ENCODE measurements at regions of chr7 and their contacts with region 1.

Region 1: GRCh38 chr7:74272305-74273038 is 16.7 kb upstream of the CLIP2 start:
- DNase-seq: peak; percentile 58
- ATAC-seq: peak; percentile 21
- H3K4me3 Mint-ChIP-seq: no peak overlapping the region
- H3K27ac Mint-ChIP-seq: peak overlapping the region; percentile 57
- H3K4me1 Mint-ChIP-seq: peaks cover 11% of the 10 kb centered on the region
- H3K27me3 Mint-ChIP-seq: peaks cover 6% of the 10 kb centered on the region
- CTCF ChIP-seq: no peak

Region 2: GRCh38 chr7:74083117-74083876 is 189.2 kb before region 1 on chr7 and contains the start of gene LIMK1:
- CTCF ChIA-PET with region 1: no interaction called
- POLR2A ChIA-PET with region 1: interaction called, 3 read pairs
- intact Hi-C with region 1: loop called (anchors 5 kb)
- DNase-seq: peak; percentile 80
- ATAC-seq: peak; percentile 95
- H3K4me3 Mint-ChIP-seq: peak within 1 kb of the TSS; percentile 83
- H3K27ac Mint-ChIP-seq: peak within 1 kb of the TSS; percentile 86
- H3K4me1 Mint-ChIP-seq: peaks cover 8% of the 10 kb centered on the region
- H3K27me3 Mint-ChIP-seq: no peaks in the 10 kb centered on the region
- CTCF ChIP-seq: no peak
- total RNA-seq, gene LIMK1: 17.8 to 20.8 TPM

Region 3: GRCh38 chr7:74289018-74289658 is 16.7 kb after region 1 on chr7 and contains the start of gene CLIP2:
- CTCF ChIA-PET with region 1: interaction called, 11 read pairs
- POLR2A ChIA-PET with region 1: interaction called, 3 read pairs
- intact Hi-C with region 1: loop called (anchors 2 kb)
- DNase-seq: peak; percentile 74
- ATAC-seq: peak; percentile 89
- H3K4me3 Mint-ChIP-seq: peak within 1 kb of the TSS; percentile 65
- H3K27ac Mint-ChIP-seq: peak within 1 kb of the TSS; percentile 55
- H3K4me1 Mint-ChIP-seq: peaks cover 12% of the 10 kb centered on the region
- H3K27me3 Mint-ChIP-seq: peaks cover 18% of the 10 kb centered on the region
- CTCF ChIP-seq: no peak
- total RNA-seq, gene CLIP2: 1.3 to 1.4 TPM

Region 4: GRCh38 chr7:74379938-74380337 is 107.5 kb after region 1 on chr7:
- CTCF ChIA-PET with region 1: no interaction called
- POLR2A ChIA-PET with region 1: no interaction called
- intact Hi-C with region 1: loop called (anchors 10 kb)
- DNase-seq: no peak
- ATAC-seq: no peak
- H3K4me3 Mint-ChIP-seq: no peak overlapping the region
- H3K27ac Mint-ChIP-seq: no peak overlapping the region
- H3K4me1 Mint-ChIP-seq: no peaks in the 10 kb centered on the region
- H3K27me3 Mint-ChIP-seq: no peaks in the 10 kb centered on the region
- CTCF ChIP-seq: no peak